IMR-90 (cell line): ENCODE measurements at regions of chr12 and their contacts with region 1.

Region 1: DNA sequence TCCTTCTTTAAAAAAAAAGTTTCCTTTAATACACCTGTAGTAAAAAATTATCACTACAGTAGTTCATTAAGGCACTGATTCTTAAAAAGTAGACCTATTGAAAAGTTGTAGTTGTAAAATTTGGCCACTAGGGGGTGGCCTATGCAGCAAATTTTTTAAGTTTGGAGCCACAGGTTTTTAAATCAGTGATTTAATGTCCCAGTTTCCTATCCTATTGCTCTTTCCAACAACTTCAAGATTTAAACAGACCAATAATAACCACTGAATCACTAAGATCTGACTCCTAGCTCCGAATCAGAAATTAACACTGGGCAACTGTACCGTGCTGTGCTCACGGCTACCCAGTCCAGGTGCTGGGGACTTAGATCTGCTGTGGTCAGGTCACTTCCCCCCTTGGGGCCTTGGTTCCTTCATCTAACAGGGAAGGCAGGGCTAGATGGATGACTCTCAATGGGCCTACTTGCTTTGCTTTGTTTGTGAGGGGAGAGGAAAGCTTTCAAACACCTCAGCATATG is 279.3 kb downstream of the MED13L start:
- DNase-seq: peak; percentile 72
- ATAC-seq: peak; percentile 85
- H3K4me3 ChIP-seq: no peak overlapping the region
- H3K27ac ChIP-seq: no peak overlapping the region
- H3K4me1 ChIP-seq: peaks cover 5% of the 10 kb centered on the region
- H3K27me3 ChIP-seq: no peaks in the 10 kb centered on the region
- CTCF ChIP-seq: peak; percentile 74
- POLR2A ChIP-seq: no peak
- RAD21 ChIP-seq: peak; percentile 73

Region 2: GRCh38 chr12:115943630-115944391 is 54.4 kb before region 1 on chr12:
- CTCF ChIA-PET with region 1: no interaction called
- POLR2A ChIA-PET with region 1: no interaction called
- dilution Hi-C with region 1: no loop called
- in situ Hi-C with region 1: no loop called
- intact Hi-C with region 1: no loop called
- DNase-seq: no peak
- ATAC-seq: no peak
- H3K4me3 ChIP-seq: no peak overlapping the region
- H3K27ac ChIP-seq: no peak overlapping the region
- H3K4me1 ChIP-seq: no peaks in the 10 kb centered on the region; the same call in 1 of the 2 replicates
- H3K27me3 ChIP-seq: no peaks in the 10 kb centered on the region
- CTCF ChIP-seq: no peak
- POLR2A ChIP-seq: no peak
- RAD21 ChIP-seq: no peak

Region 3: GRCh38 chr12:116426391-116427136 is 428.4 kb after region 1 on chr12:
- CTCF ChIA-PET with region 1: no interaction called
- POLR2A ChIA-PET with region 1: no interaction called
- dilution Hi-C with region 1: no loop called
- in situ Hi-C with region 1: no loop called
- intact Hi-C with region 1: loop called (anchors 5 kb)
- DNase-seq: peak; percentile 98
- ATAC-seq: peak; percentile 95
- H3K4me3 ChIP-seq: no peak overlapping the region
- H3K27ac ChIP-seq: peak overlapping the region; percentile 64
- H3K4me1 ChIP-seq: peaks cover 12% of the 10 kb centered on the region
- H3K27me3 ChIP-seq: no peaks in the 10 kb centered on the region
- CTCF ChIP-seq: peak; percentile 63
- POLR2A ChIP-seq: 0 out of 2 replicates have a peak, but pooled peaks have one; percentile 33
- RAD21 ChIP-seq: peak; percentile 76

Region 4: GRCh38 chr12:116525418-116526001 is 527.3 kb after region 1 on chr12:
- CTCF ChIA-PET with region 1: no interaction called
- POLR2A ChIA-PET with region 1: no interaction called
- dilution Hi-C with region 1: no loop called
- in situ Hi-C with region 1: no loop called
- intact Hi-C with region 1: loop called (anchors 10 kb)
- DNase-seq: peak; percentile 92
- ATAC-seq: peak; percentile 92
- H3K4me3 ChIP-seq: peak overlapping the region; percentile 16; the same call in 1 of the 2 replicates
- H3K27ac ChIP-seq: peak overlapping the region; percentile 90
- H3K4me1 ChIP-seq: peaks cover 12% of the 10 kb centered on the region
- H3K27me3 ChIP-seq: no peaks in the 10 kb centered on the region
- CTCF ChIP-seq: no peak
- POLR2A ChIP-seq: peak; percentile 46; the same call in 1 of the 2 replicates
- RAD21 ChIP-seq: peak; percentile 26; the same call in 1 of the 2 replicates

Region 5: GRCh38 chr12:116599285-116600136 is 601.3 kb after region 1 on chr12:
- CTCF ChIA-PET with region 1: no interaction called
- POLR2A ChIA-PET with region 1: no interaction called
- dilution Hi-C with region 1: no loop called
- in situ Hi-C with region 1: loop called (anchors 10 kb)
- intact Hi-C with region 1: loop called (anchors 5 kb)
- DNase-seq: peak; percentile 58
- ATAC-seq: peak; percentile 93
- H3K4me3 ChIP-seq: no peak overlapping the region
- H3K27ac ChIP-seq: peak overlapping the region; percentile 61
- H3K4me1 ChIP-seq: peaks cover 11% of the 10 kb centered on the region
- H3K27me3 ChIP-seq: no peaks in the 10 kb centered on the region; the same call in 1 of the 2 replicates
- CTCF ChIP-seq: peak; percentile 61
- POLR2A ChIP-seq: no peak
- RAD21 ChIP-seq: peak; percentile 64

Region 6: GRCh38 chr12:116697305-116697704 is 699.1 kb after region 1 on chr12:
- CTCF ChIA-PET with region 1: interaction called, 5 read pairs
- POLR2A ChIA-PET with region 1: no interaction called
- dilution Hi-C with region 1: no loop called
- in situ Hi-C with region 1: loop called (anchors 10 kb)
- intact Hi-C with region 1: no loop called
- DNase-seq: no peak
- ATAC-seq: peak; percentile 63; the same call in 1 of the 2 replicates
- H3K4me3 ChIP-seq: no peak overlapping the region
- H3K27ac ChIP-seq: no peak overlapping the region
- H3K4me1 ChIP-seq: no peaks in the 10 kb centered on the region; the same call in 1 of the 2 replicates
- H3K27me3 ChIP-seq: peaks cover 45% of the 10 kb centered on the region
- CTCF ChIP-seq: peak; percentile 29; the same call in 1 of the 2 replicates
- POLR2A ChIP-seq: no peak
- RAD21 ChIP-seq: peak; percentile 42

Region 7: DNA sequence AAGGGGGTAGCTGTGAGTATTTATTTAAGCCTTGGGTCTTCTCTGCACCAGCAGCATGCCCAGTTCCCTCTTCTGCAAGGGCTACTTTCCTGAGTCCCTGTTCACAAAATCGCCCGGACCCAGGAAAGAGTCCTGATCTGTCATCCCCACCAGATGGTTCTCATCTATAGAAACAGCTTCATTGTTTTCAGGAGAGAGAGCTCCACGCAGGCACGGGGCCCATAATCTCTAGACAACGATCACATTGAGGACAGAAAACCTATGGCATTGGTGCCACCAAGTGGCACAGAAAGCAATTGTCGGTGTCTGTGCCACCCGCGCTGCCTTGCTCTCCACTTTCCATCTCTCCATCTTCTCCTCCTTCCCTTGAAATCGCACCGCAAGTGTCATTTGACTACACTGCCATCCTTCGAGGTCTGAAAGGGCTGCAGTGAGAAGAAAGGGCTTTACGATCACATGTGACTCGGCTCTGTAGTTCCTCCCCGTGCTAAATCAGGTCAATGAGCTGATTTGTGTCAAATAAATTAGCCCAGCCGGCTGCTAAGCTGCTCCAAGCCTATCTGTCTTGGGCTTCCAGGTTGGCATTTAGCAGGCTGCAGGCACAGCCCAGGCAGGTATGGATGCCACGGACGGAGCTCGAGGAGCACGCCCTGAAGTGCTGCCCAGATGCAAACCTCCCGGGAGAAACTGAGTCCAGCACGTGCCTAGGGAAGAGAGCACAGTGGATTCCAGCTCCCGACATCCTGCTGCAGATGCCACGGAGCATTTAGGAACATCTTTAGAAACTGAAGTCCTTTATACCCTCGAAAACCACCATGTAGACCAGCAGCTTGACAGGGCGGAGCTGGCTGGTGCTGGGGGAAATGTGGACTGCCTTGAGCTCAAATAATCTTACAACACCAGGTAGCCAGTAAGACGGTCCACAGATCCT is 710.9 kb after region 1 on chr12:
- CTCF ChIA-PET with region 1: interaction called, 3 read pairs
- POLR2A ChIA-PET with region 1: no interaction called
- dilution Hi-C with region 1: no loop called
- in situ Hi-C with region 1: no loop called
- intact Hi-C with region 1: loop called (anchors 1 kb)
- DNase-seq: peak; percentile 58
- ATAC-seq: peak; percentile 90
- H3K4me3 ChIP-seq: no peak overlapping the region
- H3K27ac ChIP-seq: no peak overlapping the region
- H3K4me1 ChIP-seq: no peaks in the 10 kb centered on the region
- H3K27me3 ChIP-seq: no peaks in the 10 kb centered on the region; the same call in 1 of the 2 replicates
- CTCF ChIP-seq: peak; percentile 53
- POLR2A ChIP-seq: no peak
- RAD21 ChIP-seq: peak; percentile 73